ENCODE measurements at regions of chr19 and their contacts with region 1.

Region 1: DNA sequence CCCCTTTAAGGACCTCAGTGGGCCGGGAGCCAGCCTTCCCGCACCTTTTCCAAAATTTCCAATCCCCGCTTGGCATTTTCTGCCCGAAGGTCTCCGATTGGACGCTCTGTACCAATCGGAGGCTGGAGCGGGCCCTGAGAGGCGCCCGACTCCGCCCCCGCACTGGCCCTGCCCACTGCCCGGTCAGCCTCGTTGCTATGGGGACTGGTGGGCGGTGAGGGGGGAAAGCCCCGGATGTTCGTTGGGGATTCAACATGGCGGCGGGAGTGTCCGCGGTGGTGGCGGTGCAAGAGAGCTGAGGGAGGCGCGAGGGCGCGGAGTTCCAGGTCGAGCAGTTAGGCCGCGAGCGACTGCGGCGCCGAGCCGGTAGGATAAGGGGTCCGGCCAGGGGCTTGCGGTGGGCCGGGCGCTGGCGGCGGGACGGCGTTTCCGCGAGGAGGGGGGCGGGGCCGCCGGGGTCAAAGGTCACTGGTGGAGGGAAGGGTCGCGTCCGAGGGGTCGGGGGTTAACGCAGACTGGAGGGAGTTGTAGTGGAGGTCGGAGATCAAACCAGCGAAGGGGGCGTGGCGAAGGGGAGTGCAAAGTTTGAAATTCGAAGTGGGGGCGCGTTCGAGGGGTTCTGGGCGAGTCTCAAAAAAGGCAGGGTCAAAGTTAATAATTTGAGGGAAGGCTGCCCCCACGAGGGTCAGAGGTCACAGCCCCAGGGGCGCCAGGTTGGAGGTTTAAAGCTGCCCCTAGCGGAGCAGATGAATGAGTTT is at the start of gene PAK4:
- DNase-seq: peak; percentile 98
- ATAC-seq: peak; percentile 99
- total RNA-seq, gene PAK4: 14.0 TPM

Region 2: GRCh38 chr19:39187559-39187957 is 61.8 kb after region 1 on chr19:
- intact Hi-C with region 1: loop called (anchors 5 kb)
- DNase-seq: no peak
- ATAC-seq: no peak

Region 3: DNA sequence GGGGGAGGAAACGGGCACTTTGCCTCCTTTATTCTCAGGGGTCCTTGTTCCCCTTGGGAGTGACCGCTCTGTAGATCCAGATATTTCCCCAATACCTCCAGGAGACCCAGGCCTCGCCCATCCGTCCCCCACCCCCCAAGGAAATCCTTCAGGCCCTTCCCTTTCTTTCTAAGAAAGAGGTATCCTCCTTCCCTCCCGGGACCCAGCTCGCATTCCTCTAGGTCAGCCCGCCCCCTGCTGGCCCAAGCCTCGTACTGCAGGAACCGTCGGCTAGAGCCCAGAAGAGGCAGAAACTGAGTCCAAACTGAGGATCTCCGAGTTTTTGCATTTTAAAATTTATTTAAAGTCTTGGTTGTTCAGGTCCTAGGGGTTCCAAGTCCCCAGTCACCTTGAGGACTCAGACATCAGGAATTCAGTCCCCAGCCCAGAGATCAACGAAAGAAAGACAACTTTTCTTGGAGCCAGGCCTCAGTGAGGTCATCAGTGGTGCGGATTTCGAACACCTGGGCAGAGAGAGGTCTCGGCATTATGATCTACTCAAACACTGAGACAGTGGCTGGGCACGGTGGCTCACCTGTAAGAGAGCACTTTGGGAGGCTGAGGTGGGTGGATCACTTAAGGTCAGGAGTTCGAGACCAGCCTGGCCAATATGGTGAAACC is 202.4 kb after region 1 on chr19:
- intact Hi-C with region 1: loop called (anchors 5 kb)
- DNase-seq: peak; percentile 91
- ATAC-seq: peak; percentile 90

Region 4: DNA sequence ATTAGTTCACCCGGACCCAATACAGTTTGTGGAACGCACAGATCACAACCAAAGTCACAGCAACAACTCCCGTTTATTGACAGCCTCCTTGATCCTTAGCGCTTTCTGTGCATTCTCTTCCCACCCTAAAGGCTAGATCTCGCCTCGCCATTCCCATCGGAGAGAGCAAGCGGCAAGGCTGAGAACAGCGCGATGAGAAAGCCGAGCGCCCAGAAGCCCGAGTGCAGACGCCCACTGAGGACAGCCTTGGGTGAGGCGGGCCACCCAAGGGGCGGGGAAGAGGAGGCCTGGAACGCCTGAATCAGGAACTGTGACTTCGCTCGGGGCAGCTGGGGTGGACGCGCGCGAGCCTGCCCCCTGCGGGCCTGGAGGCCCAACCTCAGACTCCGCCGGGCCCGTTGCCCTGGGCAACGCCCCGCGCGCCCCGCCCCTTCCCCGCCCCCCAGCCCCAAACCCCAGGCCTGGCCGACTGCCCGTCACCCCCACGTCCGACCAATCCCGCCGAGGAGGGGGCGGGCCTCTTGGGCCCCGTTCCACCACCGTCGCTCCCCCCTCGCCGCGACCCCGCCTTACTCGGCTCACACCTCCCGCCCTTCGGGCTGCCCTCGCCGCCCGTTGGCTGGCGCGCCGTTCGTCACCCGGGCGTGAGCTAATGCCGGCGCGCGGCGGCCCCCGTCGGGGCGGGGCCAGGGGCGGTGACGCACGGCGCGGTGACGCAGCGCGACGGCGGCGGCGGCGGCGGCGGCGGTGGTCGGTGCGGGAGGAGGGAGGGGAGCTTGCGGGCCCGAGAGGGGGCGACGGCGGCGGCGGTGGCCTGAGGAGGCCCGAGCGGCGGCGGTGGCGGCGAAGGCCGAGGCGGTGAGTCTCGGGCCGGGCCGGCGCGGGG is 216.2 kb after region 1 on chr19 and contains the start of gene SAMD4B:
- intact Hi-C with region 1: loop called (anchors 5 kb)
- DNase-seq: peak; percentile 99
- ATAC-seq: peak; percentile 97
- total RNA-seq, gene SAMD4B: 43.1 TPM

Measured in Right ventricle myocardium superior (tissue), 1 donor.